Caco-2 (cell line): ENCODE measurements at regions of chr11 and their contacts with region 1.

Region 1: DNA sequence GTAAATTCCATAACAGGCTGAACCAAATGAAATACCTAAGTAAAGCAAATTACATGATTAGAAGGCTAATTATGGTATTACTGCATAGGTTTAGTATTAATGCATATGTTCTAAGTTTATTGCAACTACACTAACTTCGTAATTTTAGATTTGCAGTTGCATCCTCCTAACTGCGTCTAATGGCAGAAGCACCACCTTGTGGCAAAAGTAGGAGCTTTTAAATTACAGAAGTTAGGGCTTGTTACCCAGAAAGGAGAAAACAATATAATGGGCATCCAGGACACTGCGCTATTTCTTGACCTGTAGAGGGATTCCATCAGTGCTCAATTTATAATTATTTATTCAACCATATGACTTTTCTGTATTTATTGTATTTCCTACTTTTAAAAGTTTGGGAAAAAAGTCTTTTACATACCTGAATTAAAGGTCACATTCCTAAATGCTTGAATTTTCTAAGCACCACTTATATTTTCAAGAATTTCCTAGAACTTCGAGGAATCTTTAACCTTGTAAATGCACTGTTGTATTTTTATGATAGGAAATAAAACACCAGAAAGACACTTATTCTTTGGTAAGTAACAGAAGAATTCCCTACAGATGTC is 16.3 kb upstream of the GPR83 start:
- DNase-seq: peak in 1 of 2 experiments; percentile 58
- H3K4me3 ChIP-seq: no peak overlapping the region
- H3K4me3 Mint-ChIP-seq: no peak overlapping the region
- H3K27ac Mint-ChIP-seq: no peak overlapping the region
- H3K4me1 ChIP-seq: no peaks in the 10 kb centered on the region
- H3K4me1 Mint-ChIP-seq: no peaks in the 10 kb centered on the region
- H3K27me3 ChIP-seq: no peaks in the 10 kb centered on the region
- H3K27me3 Mint-ChIP-seq: no peaks in the 10 kb centered on the region
- CTCF ChIP-seq: peak; percentile 74 to 79

Region 2: DNA sequence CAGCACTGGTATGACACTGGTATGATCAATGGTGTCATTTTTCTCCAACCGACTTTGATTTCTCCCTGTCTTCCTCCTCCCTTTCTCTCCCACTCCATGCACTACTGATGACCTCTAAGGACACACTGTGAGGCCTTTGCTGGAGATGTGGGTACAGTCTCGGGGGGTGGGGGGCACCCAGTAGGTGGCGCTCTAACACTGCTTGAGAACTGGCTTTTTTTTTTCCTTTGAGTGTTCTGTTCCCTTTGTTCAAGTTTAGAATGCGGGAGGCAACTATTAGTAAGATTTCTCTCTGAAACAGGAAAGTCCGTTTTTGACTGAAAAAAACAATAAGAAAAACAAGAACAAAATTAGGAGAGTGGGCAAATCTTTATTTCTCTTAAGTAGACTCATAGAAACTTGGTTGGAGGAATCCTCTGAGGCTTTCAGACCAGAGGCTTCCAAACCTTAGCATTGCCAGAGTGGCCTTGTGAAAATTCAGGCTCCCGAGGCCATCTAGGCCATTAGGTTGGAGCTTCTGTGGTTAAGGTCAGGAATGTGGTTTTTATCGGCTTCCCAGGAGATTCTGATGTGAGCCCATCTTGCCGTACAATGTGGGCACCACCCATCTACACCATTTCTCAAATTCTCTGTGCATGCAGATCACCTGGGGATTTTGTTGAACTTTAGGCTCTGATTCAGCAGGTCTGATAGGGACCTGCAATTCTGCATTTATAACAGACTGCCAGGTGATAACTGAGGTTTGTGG is 245.6 kb before region 1 on chr11:
- CTCF ChIA-PET with region 1: interaction called, 5 read pairs
- POLR2A ChIA-PET with region 1: no interaction called
- intact Hi-C with region 1: loop called (anchors 1 kb)
- DNase-seq: peak in 1 of 2 experiments; percentile 66
- H3K4me3 ChIP-seq: no peak overlapping the region
- H3K4me3 Mint-ChIP-seq: no peak overlapping the region
- H3K27ac Mint-ChIP-seq: no peak overlapping the region
- H3K4me1 ChIP-seq: no peaks in the 10 kb centered on the region
- H3K4me1 Mint-ChIP-seq: peaks cover 6% of the 10 kb centered on the region
- H3K27me3 ChIP-seq: no peaks in the 10 kb centered on the region
- H3K27me3 Mint-ChIP-seq: no peaks in the 10 kb centered on the region
- CTCF ChIP-seq: peak; percentile 86 to 92

Region 3: GRCh38 chr11:94183886-94184264 is 233.6 kb before region 1 on chr11:
- CTCF ChIA-PET with region 1: interaction called, 7 read pairs
- POLR2A ChIA-PET with region 1: no interaction called
- intact Hi-C with region 1: loop called (anchors 1 kb)
- DNase-seq: peak; percentile 81 to 87
- H3K4me3 ChIP-seq: no peak overlapping the region
- H3K4me3 Mint-ChIP-seq: no peak overlapping the region
- H3K27ac Mint-ChIP-seq: no peak overlapping the region
- H3K4me1 ChIP-seq: no peaks in the 10 kb centered on the region
- H3K4me1 Mint-ChIP-seq: peaks cover 11% of the 10 kb centered on the region
- H3K27me3 ChIP-seq: no peaks in the 10 kb centered on the region
- H3K27me3 Mint-ChIP-seq: no peaks in the 10 kb centered on the region
- CTCF ChIP-seq: peak; percentile 96 to 97

Region 4: DNA sequence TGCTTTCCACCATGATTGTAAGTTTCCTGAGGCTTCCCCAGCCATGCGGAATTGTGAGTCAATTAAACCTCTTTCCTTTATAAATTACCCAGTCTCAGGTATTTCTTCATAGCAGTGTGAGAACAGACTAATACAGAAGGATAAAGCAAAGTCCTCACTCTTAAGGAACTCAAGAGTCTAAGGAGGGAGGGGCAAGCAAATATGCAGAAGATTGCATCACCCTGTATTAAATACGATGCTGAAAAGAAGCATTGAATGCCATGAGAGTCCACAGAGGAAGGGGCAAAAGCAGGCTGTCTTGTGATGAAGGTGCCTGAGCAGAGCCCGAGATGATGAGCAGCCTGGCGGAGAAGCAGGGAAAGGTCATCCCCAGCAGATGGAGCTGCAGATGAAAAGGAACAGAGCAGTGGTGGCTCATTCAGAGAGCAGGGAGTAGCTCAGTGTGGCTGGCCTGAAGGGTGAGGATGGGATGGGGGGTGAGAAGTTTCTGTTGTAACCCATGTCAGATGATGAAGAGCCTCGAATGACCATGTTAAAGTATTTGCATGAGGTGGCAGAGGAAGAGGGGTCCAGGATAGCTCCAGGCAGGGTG is 119.4 kb before region 1 on chr11:
- CTCF ChIA-PET with region 1: interaction called, 14 read pairs
- POLR2A ChIA-PET with region 1: no interaction called
- intact Hi-C with region 1: loop called (anchors 1 kb)
- DNase-seq: peak in 1 of 2 experiments; percentile 42
- H3K4me3 ChIP-seq: no peak overlapping the region
- H3K4me3 Mint-ChIP-seq: no peak overlapping the region
- H3K27ac Mint-ChIP-seq: no peak overlapping the region
- H3K4me1 ChIP-seq: no peaks in the 10 kb centered on the region
- H3K4me1 Mint-ChIP-seq: peaks cover 13% of the 10 kb centered on the region
- H3K27me3 ChIP-seq: no peaks in the 10 kb centered on the region
- H3K27me3 Mint-ChIP-seq: peaks cover 3% of the 10 kb centered on the region
- CTCF ChIP-seq: peak; percentile 11 to 49

Region 5: GRCh38 chr11:94325681-94326080 is 91.8 kb before region 1 on chr11:
- CTCF ChIA-PET with region 1: no interaction called
- POLR2A ChIA-PET with region 1: no interaction called
- intact Hi-C with region 1: loop called (anchors 2 kb)
- DNase-seq: peak in 1 of 2 experiments; percentile 61
- H3K4me3 ChIP-seq: no peak overlapping the region
- H3K4me3 Mint-ChIP-seq: no peak overlapping the region
- H3K27ac Mint-ChIP-seq: no peak overlapping the region
- H3K4me1 ChIP-seq: peaks cover 5% of the 10 kb centered on the region
- H3K4me1 Mint-ChIP-seq: peaks cover 9% of the 10 kb centered on the region
- H3K27me3 ChIP-seq: no peaks in the 10 kb centered on the region
- H3K27me3 Mint-ChIP-seq: no peaks in the 10 kb centered on the region
- CTCF ChIP-seq: peak; percentile 66 to 71

Region 6: GRCh38 chr11:94342250-94342649 is 75.2 kb before region 1 on chr11:
- CTCF ChIA-PET with region 1: no interaction called
- POLR2A ChIA-PET with region 1: no interaction called
- intact Hi-C with region 1: no loop called
- DNase-seq: no peak
- H3K4me3 ChIP-seq: no peak overlapping the region
- H3K4me3 Mint-ChIP-seq: no peak overlapping the region
- H3K27ac Mint-ChIP-seq: no peak overlapping the region
- H3K4me1 ChIP-seq: no peaks in the 10 kb centered on the region
- H3K4me1 Mint-ChIP-seq: peaks cover 9% of the 10 kb centered on the region
- H3K27me3 ChIP-seq: no peaks in the 10 kb centered on the region
- H3K27me3 Mint-ChIP-seq: peaks cover 3% of the 10 kb centered on the region
- CTCF ChIP-seq: no peak

Region 7: DNA sequence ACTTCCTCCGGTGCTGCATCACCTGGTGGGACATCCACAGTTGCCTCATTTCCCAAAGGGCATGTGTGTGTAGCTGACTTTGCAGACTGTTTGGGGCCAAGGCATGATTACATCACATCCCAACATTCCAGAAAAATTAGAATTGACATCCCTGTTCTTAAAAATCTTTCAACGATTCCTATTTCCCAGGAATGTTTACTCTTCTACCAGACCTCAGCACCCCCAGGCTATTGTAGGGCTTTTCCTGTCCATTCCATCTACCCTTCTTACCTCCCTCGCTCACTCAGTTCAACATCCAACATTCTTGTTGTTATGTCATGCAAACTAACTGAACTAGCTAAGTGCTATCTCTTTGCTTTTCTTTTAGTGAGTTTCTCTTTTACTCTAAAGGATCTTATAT is 187.0 kb after region 1 on chr11:
- CTCF ChIA-PET with region 1: no interaction called
- POLR2A ChIA-PET with region 1: no interaction called
- intact Hi-C with region 1: no loop called
- DNase-seq: no peak
- H3K4me3 ChIP-seq: no peak overlapping the region
- H3K4me3 Mint-ChIP-seq: no peak overlapping the region
- H3K27ac Mint-ChIP-seq: no peak overlapping the region
- H3K4me1 ChIP-seq: peaks cover 30% of the 10 kb centered on the region
- H3K4me1 Mint-ChIP-seq: peaks cover 20% of the 10 kb centered on the region
- H3K27me3 ChIP-seq: no peaks in the 10 kb centered on the region
- H3K27me3 Mint-ChIP-seq: no peaks in the 10 kb centered on the region
- CTCF ChIP-seq: no peak